Heart right ventricle (tissue), 16 donors: ENCODE measurements at regions of chr2 and their contacts with region 1.

Region 1: GRCh38 chr2:68196120-68196716 is 38.5 kb downstream of the PNO1 start:
- DNase-seq: peak in 1 of 2 donors; percentile 35
- ATAC-seq: peak in 2 of 8 donors; percentile 23 to 52
- H3K4me3 ChIP-seq: no peak overlapping the region
- H3K27ac ChIP-seq: no peak overlapping the region
- H3K4me1 ChIP-seq: peaks cover 0 to 79% (median 25%) of the 10 kb centered on the region in 9 donors
- H3K27me3 ChIP-seq: no peaks in the 10 kb centered on the region
- CTCF ChIP-seq: peak in 8 of 9 donors; percentile 50 to 85 (median 73)

Region 2: GRCh38 chr2:68027959-68028358 is 168.3 kb before region 1 on chr2:
- intact Hi-C with region 1: no loop called
- DNase-seq: no peak
- ATAC-seq: no peak
- H3K4me3 ChIP-seq: no peak overlapping the region
- H3K27ac ChIP-seq: no peak overlapping the region
- H3K4me1 ChIP-seq: peaks cover 0 to 3% (median 0%) of the 10 kb centered on the region in 9 donors
- H3K27me3 ChIP-seq: peaks cover 0 to 14% (median 0%) of the 10 kb centered on the region in 7 donors
- CTCF ChIP-seq: no peak

Region 3: GRCh38 chr2:68244456-68244855 is 48.2 kb after region 1 on chr2:
- intact Hi-C with region 1: loop called in 5 of 10 experiments (anchors 5 to 10 kb)
- DNase-seq: no peak
- ATAC-seq: no peak
- H3K4me3 ChIP-seq: no peak overlapping the region
- H3K27ac ChIP-seq: peak overlapping the region in 1 of 10 donors; percentile 2
- H3K4me1 ChIP-seq: peaks cover 4 to 99% (median 85%) of the 10 kb centered on the region in 9 donors
- H3K27me3 ChIP-seq: no peaks in the 10 kb centered on the region
- CTCF ChIP-seq: peak in 5 of 9 donors; percentile 27 to 49 (median 33)

Region 4: GRCh38 chr2:68282811-68283418 is 86.7 kb after region 1 on chr2:
- intact Hi-C with region 1: loop called in 4 of 10 experiments (anchors 1 to 10 kb)
- DNase-seq: no peak
- ATAC-seq: peak in 1 of 8 donors; percentile 59
- H3K4me3 ChIP-seq: no peak overlapping the region
- H3K27ac ChIP-seq: no peak overlapping the region
- H3K4me1 ChIP-seq: peaks cover 0 to 38% (median 18%) of the 10 kb centered on the region in 9 donors
- H3K27me3 ChIP-seq: no peaks in the 10 kb centered on the region
- CTCF ChIP-seq: peak; percentile 49 to 84 (median 74)

Region 5: GRCh38 chr2:68662466-68662865 is 466.2 kb after region 1 on chr2:
- intact Hi-C with region 1: no loop called
- DNase-seq: no peak
- ATAC-seq: no peak
- H3K4me3 ChIP-seq: no peak overlapping the region
- H3K27ac ChIP-seq: no peak overlapping the region
- H3K4me1 ChIP-seq: peaks cover 0 to 5% (median 0%) of the 10 kb centered on the region in 9 donors
- H3K27me3 ChIP-seq: peaks cover 0 to 21% (median 0%) of the 10 kb centered on the region in 7 donors
- CTCF ChIP-seq: no peak